AG04449 (cell line): ENCODE measurements at regions of chr2 and their contacts with region 1.

Region 1: DNA sequence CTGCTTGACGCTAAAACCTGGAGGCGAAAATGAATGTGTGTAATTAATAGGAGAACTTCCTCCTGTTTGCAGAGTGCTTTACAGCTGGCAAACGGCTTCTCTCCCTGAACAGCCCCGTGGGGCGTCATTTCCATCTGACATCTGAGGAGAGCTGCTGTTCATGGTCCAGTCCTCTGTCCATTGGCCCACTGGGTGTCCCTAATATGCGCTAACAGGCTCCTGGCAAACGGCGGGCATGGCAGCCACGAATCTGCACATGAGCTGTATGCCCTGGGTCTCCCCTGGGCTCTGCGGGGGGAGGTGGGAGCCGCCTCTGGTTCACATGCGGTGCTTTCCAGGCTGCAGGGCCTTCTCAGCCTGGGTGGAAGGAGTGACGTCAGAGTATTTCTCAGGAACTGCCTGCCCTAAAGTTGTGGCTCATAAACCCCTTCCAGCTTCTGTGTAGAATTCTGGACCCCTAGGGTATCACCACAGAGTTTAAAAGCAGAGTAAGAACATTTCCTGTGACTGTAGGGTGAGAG is 73.2 kb downstream of the LRRFIP1 start:
- DNase-seq: no peak
- H3K4me3 ChIP-seq: no peak overlapping the region
- CTCF ChIP-seq: no peak

Region 2: DNA sequence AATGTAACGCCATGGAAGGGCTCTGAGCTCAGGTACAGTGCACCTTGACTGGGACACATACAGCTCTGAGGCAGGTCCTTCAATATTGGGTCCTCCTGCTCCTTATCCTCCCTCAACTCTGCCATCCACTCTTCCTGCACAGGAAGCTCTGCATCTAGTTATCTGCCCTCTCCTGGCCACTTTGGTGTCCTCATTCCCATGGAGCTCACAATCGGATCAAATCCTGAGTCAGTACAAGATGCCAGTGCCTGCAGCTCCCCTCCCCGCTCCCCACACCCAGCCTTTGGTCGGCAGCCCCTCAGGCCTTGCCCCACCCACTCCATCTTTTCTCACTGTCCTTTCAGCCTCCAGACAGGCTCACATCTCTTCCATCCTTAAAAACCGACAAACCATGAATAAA is 15.2 kb before region 1 on chr2:
- CTCF ChIA-PET with region 1: interaction called, 14 read pairs
- POLR2A ChIA-PET with region 1: interaction called, 4 read pairs
- DNase-seq: no peak
- H3K4me3 ChIP-seq: no peak overlapping the region
- CTCF ChIP-seq: peak; percentile 46